WTC11 (cell line): ENCODE measurements at regions of chr6 and their contacts with region 1.

Region 1: GRCh38 chr6:42095785-42096541 is 45.6 kb downstream of the TAF8 start:
- DNase-seq: peak; percentile 42
- ATAC-seq: peak; percentile 24
- H3K4me3 Mint-ChIP-seq: no peak overlapping the region
- H3K27ac Mint-ChIP-seq: no peak overlapping the region
- H3K4me1 Mint-ChIP-seq: peaks cover 33% of the 10 kb centered on the region
- H3K27me3 Mint-ChIP-seq: peaks cover 82% of the 10 kb centered on the region
- CTCF ChIP-seq: no peak

Region 2: DNA sequence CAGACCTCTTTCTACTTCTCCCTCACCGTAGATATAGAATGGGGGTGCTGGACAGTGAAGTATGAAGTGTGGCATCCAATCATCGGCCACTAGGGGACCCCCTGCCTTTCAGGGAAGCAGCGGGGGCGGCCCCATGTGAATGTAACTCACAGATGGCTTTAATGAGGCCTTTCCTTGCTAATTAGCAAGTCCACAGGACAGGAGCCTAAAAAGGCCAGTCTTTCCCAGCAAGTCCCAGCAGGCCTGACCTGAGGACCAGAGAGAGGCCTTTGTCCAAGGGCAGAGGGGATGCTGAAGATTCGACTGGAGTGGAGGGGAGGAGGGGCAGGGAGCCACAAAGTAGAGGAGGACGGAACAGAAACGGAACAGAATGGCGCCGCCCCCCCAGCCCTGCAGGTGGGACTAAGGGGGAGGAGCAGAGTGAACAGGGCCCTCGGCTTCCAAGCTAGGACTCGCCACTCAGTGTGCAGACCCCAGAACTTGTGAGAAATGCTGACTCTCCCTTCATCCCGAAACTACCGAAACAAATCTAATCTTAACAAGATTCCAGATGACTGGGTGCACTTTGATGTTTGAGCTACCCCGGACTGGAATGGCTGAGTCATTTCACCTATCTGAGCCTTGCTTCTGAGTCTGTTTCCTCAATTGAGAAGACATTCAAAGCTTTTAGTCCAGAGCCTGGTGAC is 40.7 kb after region 1 on chr6:
- CTCF ChIA-PET with region 1: interaction called, 14 read pairs
- POLR2A ChIA-PET with region 1: no interaction called
- DNase-seq: peak; percentile 87
- ATAC-seq: peak; percentile 81
- H3K4me3 Mint-ChIP-seq: peak overlapping the region; percentile 61
- H3K27ac Mint-ChIP-seq: peak overlapping the region; percentile 100
- H3K4me1 Mint-ChIP-seq: peaks cover 79% of the 10 kb centered on the region
- H3K27me3 Mint-ChIP-seq: no peaks in the 10 kb centered on the region; the same call in 1 of the 2 replicates
- CTCF ChIP-seq: no peak; the same call in 1 of the 2 replicates

Region 3: DNA sequence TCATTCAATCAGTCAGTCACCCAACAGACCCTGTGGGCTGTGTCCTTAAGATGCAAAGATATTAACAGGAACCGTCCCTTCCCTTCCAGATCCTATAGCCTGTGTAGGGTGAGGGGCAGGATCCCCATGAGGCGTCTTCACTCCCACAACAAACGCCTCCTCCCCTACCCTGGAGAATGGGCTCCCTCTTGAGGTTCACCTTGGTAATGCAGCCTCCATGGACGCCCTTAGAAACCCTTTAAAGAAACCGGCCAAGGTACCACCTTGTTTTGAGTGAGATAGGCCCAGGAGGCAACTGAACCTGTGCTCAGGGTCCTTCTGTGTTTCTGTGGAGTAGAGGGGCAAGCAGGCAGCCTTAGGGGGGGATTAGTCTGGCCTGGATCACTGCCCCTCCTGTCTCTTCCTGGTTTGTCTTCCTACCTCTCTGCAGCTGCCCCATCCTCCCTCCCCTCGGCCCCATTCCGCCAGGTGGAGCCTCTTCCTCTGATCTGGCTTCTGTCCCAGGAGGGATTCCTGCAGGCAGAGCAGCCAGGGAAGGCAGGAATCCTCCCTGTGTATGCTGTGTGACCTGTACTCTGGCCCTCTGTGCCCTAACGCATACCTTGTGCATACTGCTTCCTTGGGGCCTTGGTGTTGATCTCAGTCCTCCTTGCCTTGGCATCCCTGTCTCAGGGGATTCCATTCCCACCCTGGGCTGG is 70.6 kb after region 1 on chr6:
- CTCF ChIA-PET with region 1: interaction called, 18 read pairs
- POLR2A ChIA-PET with region 1: no interaction called
- DNase-seq: peak; percentile 96
- ATAC-seq: peak; percentile 91
- H3K4me3 Mint-ChIP-seq: no peak overlapping the region
- H3K27ac Mint-ChIP-seq: peak overlapping the region; percentile 81
- H3K4me1 Mint-ChIP-seq: peaks cover 45% of the 10 kb centered on the region
- H3K27me3 Mint-ChIP-seq: peaks cover 11% of the 10 kb centered on the region
- CTCF ChIP-seq: peak; percentile 96

Region 4: DNA sequence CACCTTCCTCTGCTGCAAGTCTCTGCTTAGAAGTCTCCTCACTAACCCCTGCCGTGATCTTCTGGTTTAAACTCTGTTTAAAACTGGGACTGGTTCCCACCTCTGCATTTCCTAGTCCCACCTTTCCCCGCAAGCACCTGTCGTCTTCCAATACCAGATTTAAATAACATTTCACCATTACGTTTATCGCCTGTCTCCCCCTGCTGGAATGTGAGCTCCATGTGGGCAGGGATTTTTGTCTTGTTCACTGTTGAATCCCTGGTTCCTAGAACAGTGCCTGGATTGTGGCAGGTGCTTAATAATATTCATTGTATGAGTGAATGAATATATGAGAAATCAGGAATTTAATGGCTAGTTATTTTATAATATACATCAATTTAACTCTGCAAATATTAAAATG is 79.9 kb after region 1 on chr6:
- CTCF ChIA-PET with region 1: interaction called, 18 read pairs
- POLR2A ChIA-PET with region 1: no interaction called
- DNase-seq: peak; percentile 42
- ATAC-seq: peak; percentile 6; the same call in 1 of the 2 replicates
- H3K4me3 Mint-ChIP-seq: no peak overlapping the region
- H3K27ac Mint-ChIP-seq: peak overlapping the region; percentile 8; the same call in 1 of the 2 replicates
- H3K4me1 Mint-ChIP-seq: peaks cover 44% of the 10 kb centered on the region
- H3K27me3 Mint-ChIP-seq: peaks cover 5% of the 10 kb centered on the region
- CTCF ChIP-seq: 0 out of 2 replicates have a peak, but pooled peaks have one; percentile 16

Region 5: GRCh38 chr6:42185597-42185996 is 89.6 kb after region 1 on chr6:
- CTCF ChIA-PET with region 1: interaction called, 15 read pairs
- POLR2A ChIA-PET with region 1: no interaction called
- DNase-seq: no peak
- ATAC-seq: no peak; the same call in 1 of the 2 replicates
- H3K4me3 Mint-ChIP-seq: no peak overlapping the region
- H3K27ac Mint-ChIP-seq: no peak overlapping the region
- H3K4me1 Mint-ChIP-seq: peaks cover 34% of the 10 kb centered on the region
- H3K27me3 Mint-ChIP-seq: no peaks in the 10 kb centered on the region; the same call in 1 of the 2 replicates
- CTCF ChIP-seq: no peak